ENCODE measurements at regions of chr7 and their contacts with region 1.

Region 1: GRCh38 chr7:119382726-119383125 is 890.2 kb upstream of the KCND2 start:
- DNase-seq: no peak
- ATAC-seq: no peak
- H3K4me3 ChIP-seq: no peak overlapping the region
- H3K4me3 Mint-ChIP-seq: no peak overlapping the region
- H3K27ac ChIP-seq: no peak overlapping the region
- H3K27ac Mint-ChIP-seq: no peak overlapping the region
- H3K4me1 ChIP-seq: no peaks in the 10 kb centered on the region
- H3K4me1 Mint-ChIP-seq: no peaks in the 10 kb centered on the region
- H3K27me3 ChIP-seq: no peaks in the 10 kb centered on the region
- H3K27me3 Mint-ChIP-seq: no peaks in the 10 kb centered on the region
- CTCF ChIP-seq: no peak

Region 2: DNA sequence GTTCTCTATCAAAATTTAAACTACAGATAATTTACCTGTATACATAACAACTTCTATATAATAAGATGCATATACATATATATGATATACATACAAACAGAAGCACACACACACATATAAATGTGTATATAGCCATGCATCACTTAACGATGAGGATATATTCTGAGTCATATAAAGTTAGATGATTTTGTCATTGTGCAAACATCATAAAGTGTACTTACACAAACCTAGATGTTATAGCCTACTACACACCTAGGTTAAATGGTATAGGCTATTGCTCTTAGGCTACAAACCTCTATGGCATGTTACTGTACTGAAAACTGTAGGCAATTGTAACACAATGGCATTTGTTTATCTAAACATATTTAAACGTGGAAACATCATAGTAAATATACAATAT is 47.3 kb before region 1 on chr7:
- CTCF ChIA-PET with region 1: no interaction called
- POLR2A ChIA-PET with region 1: no interaction called
- intact Hi-C with region 1: loop called in 1 of 2 experiments (anchors 1 kb)
- DNase-seq: no peak
- ATAC-seq: no peak
- H3K4me3 ChIP-seq: no peak overlapping the region
- H3K4me3 Mint-ChIP-seq: no peak overlapping the region
- H3K27ac ChIP-seq: no peak overlapping the region
- H3K27ac Mint-ChIP-seq: no peak overlapping the region
- H3K4me1 ChIP-seq: no peaks in the 10 kb centered on the region
- H3K4me1 Mint-ChIP-seq: no peaks in the 10 kb centered on the region
- H3K27me3 ChIP-seq: no peaks in the 10 kb centered on the region
- H3K27me3 Mint-ChIP-seq: no peaks in the 10 kb centered on the region
- CTCF ChIP-seq: no peak